Posterior vena cava (tissue), 2 donors: ENCODE measurements at regions of chr7 and their contacts with region 1.

Region 1: GRCh38 chr7:96273716-96274115 is 48.2 kb downstream of the SLC25A13 start:
- DNase-seq: no peak

Region 2: GRCh38 chr7:95684037-95684436 is 589.7 kb before region 1 on chr7:
- intact Hi-C with region 1: loop called in 1 of 2 experiments (anchors 5 kb)
- DNase-seq: no peak